SK-N-SH (cell line): ENCODE measurements at regions of chr20 and their contacts with region 1.

Region 1: DNA sequence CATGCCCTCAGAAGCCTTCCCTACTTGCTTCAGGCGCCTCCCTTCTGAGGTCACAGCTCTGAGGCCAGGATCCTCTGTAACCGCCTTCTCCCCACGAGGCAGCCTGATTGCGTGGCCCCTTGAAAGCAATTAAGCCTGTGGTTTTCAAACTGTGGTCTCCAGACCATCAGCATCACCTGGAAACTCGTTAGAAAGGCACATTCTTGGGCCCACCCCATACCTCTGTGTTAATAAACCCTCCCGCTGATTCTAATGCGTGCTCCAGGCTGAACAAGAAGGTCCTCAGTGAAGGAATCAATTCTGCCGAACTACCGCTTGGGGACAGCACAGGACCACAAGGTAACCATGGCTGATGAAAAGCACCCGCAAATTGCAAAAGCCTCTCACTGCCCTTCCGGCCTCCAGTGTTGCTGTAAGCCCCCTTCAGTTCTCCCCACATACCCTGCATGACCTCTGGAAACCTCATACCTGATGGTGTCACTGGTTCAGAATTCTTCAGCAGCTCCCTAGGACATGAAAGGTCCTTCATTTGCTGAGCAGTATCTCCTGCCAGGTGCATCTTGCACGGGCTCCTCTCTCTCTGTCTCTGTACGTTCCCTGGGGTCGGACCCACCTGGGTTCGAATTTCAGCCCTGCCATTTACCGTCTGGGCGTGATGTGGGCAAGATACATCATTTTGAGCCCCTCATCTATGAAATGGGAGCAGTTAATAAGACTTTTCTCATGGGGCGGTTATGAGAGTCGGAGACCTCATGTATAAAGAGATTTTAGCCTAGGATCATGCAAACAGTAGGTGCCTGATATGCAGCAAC is 93.3 kb upstream of the RNF24 start:
- DNase-seq: peak; percentile 76
- H3K4me3 ChIP-seq: peak overlapping the region in 1 of 2 experiments; percentile 9; a peak in 1 of 4 replicates
- H3K27ac ChIP-seq: no peak overlapping the region
- H3K4me1 ChIP-seq: peaks cover 13 to 26% of the 10 kb centered on the region in 2 experiments
- H3K27me3 ChIP-seq: no peaks in the 10 kb centered on the region
- CTCF ChIP-seq: peak; percentile 97
- EP300 ChIP-seq: no peak
- RAD21 ChIP-seq: peak; percentile 99

Region 2: GRCh38 chr20:4167261-4168021 is 58.7 kb after region 1 on chr20:
- CTCF ChIA-PET with region 1: interaction called, 24 read pairs
- POLR2A ChIA-PET with region 1: no interaction called
- DNase-seq: peak; percentile 61
- H3K4me3 ChIP-seq: no peak overlapping the region
- H3K27ac ChIP-seq: no peak overlapping the region
- H3K4me1 ChIP-seq: peaks cover 10 to 18% of the 10 kb centered on the region in 2 experiments; a peak in 2 of 4 replicates
- H3K27me3 ChIP-seq: no peaks in the 10 kb centered on the region
- CTCF ChIP-seq: no peak
- EP300 ChIP-seq: no peak
- RAD21 ChIP-seq: no peak

Region 3: DNA sequence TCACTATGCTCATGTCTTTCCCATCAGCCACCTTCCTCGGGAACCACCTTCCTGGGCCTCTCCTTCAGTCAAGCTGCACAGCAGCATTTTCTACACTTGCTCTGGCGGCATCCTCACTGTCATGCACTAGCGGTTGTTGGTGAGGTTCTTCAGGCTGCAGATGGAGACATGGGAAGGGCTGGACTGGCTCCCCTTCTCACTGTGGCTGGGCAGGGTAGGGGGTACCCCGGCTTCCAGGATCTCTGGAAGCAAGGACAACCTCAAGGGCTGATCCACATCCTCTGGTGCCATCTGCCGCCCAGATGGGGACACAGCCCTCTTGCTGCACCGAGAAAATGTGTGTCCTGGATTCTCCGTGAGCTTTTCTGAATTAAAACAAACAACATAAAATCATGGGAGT is 86.8 kb after region 1 on chr20:
- CTCF ChIA-PET with region 1: interaction called, 37 read pairs
- POLR2A ChIA-PET with region 1: no interaction called
- DNase-seq: peak; percentile 70
- H3K4me3 ChIP-seq: no peak overlapping the region
- H3K27ac ChIP-seq: no peak overlapping the region
- H3K4me1 ChIP-seq: no peaks in the 10 kb centered on the region
- H3K27me3 ChIP-seq: no peaks in the 10 kb centered on the region
- CTCF ChIP-seq: 0 out of 2 replicates have a peak, but pooled peaks have one; percentile 12
- EP300 ChIP-seq: no peak
- RAD21 ChIP-seq: peak; percentile 66